Stomach (tissue), 19 donors: ENCODE measurements at regions of chr12 and their contacts with region 1.

Region 1: GRCh38 chr12:6039894-6040568 is 84.4 kb downstream of the VWF start:
- DNase-seq: peak; percentile 54 to 90
- H3K4me3 ChIP-seq: no peak overlapping the region
- H3K27ac ChIP-seq: no peak overlapping the region
- H3K4me1 ChIP-seq: no peaks in the 10 kb centered on the region
- H3K27me3 ChIP-seq: peaks cover 0 to 4% (median 0%) of the 10 kb centered on the region in 3 donors
- CTCF ChIP-seq: peak in 5 of 7 experiments; percentile 71 to 91 (median 83)
- EP300 ChIP-seq: no peak
- POLR2A ChIP-seq: no peak

Region 2: GRCh38 chr12:5988659-5989116 is 51.3 kb before region 1 on chr12:
- intact Hi-C with region 1: loop called (anchors 2 kb)
- DNase-seq: peak; percentile 84 to 95
- H3K4me3 ChIP-seq: no peak overlapping the region
- H3K27ac ChIP-seq: no peak overlapping the region
- H3K4me1 ChIP-seq: peaks cover 0 to 4% (median 0%) of the 10 kb centered on the region in 4 donors
- H3K27me3 ChIP-seq: no peaks in the 10 kb centered on the region
- CTCF ChIP-seq: peak in 5 of 7 experiments; percentile 80 to 93 (median 91)
- EP300 ChIP-seq: no peak
- POLR2A ChIP-seq: no peak